ENCODE measurements at regions of chr15 and their contacts with region 1.

Region 1: GRCh38 chr15:49046220-49047102 is at the start of gene SECISBP2L:
- DNase-seq: peak; percentile 80 to 90
- H3K4me3 ChIP-seq: peak within 1 kb of the TSS; percentile 67
- H3K27ac ChIP-seq: peak within 1 kb of the TSS; percentile 11; the same call in 1 of the 2 replicates
- H3K4me1 ChIP-seq: peaks cover 15% of the 10 kb centered on the region
- H3K27me3 ChIP-seq: no peaks in the 10 kb centered on the region
- CTCF ChIP-seq: no peak
- total RNA-seq, gene SECISBP2L: 31.2 and 33.2 TPM in 2 replicates

Region 2: DNA sequence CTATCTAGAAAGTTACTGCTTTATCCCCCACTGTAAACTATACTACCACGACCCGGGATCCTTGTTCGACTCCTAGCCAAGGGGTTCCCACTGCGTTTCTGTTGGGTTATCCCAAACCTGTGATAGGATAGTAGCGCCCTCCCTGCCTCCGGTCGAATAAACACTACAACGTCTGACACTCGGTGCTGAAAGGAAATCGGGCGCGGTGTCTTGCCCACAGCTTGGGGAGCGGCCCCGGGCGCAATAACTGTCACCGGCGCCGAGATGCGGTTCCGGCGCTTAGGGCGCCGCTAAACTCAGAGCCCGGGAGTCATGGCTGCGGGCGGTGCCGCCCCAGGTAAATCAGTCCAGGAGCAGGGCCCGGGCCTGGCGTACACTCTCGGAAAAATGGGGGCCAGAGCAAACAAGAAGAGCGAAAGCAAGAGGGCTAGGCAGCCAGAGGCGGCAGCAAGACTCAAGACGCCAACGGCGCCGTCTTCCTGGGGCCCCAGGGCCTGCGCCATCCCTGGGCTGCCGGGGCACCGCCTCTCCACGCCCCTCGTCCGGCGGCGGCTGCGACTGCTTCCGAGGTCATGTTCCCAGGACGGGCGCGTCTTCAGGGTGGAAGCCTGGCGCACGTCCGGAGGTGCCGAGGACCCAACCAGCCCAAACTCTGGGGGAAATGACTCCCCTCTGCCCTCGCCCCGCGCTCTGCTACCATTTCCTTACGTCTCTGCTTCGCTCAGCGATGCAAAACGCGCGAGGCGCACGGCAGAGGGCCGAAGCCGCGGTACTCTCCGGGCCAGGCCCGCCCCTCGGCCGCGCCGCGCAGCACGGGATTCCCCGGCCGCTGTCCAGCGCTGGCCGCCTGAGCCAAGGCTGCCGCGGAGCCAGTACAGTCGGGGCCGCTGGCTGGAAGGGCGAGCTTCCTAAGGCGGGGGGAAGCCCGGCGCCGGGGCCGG is 715.3 kb before region 1 on chr15 and contains the start of gene DUT:
- CTCF ChIA-PET with region 1: no interaction called
- POLR2A ChIA-PET with region 1: no interaction called
- intact Hi-C with region 1: loop called (anchors 10 kb)
- DNase-seq: peak; percentile 43 to 81
- H3K4me3 ChIP-seq: peak within 1 kb of the TSS; percentile 94
- H3K27ac ChIP-seq: peak within 1 kb of the TSS; percentile 80
- H3K4me1 ChIP-seq: peaks cover 16% of the 10 kb centered on the region
- H3K27me3 ChIP-seq: no peaks in the 10 kb centered on the region
- CTCF ChIP-seq: no peak
- total RNA-seq, gene DUT: 148 and 169 TPM in 2 replicates

Region 3: GRCh38 chr15:48896869-48897814 is 149.3 kb before region 1 on chr15:
- CTCF ChIA-PET with region 1: no interaction called
- POLR2A ChIA-PET with region 1: no interaction called
- intact Hi-C with region 1: no loop called
- DNase-seq: no peak
- H3K4me3 ChIP-seq: no peak overlapping the region
- H3K27ac ChIP-seq: no peak overlapping the region
- H3K4me1 ChIP-seq: no peaks in the 10 kb centered on the region
- H3K27me3 ChIP-seq: no peaks in the 10 kb centered on the region
- CTCF ChIP-seq: no peak

Region 4: GRCh38 chr15:48996276-48996675 is 50.2 kb before region 1 on chr15:
- CTCF ChIA-PET with region 1: no interaction called
- POLR2A ChIA-PET with region 1: interaction called, 11 read pairs
- intact Hi-C with region 1: no loop called
- DNase-seq: no peak
- H3K4me3 ChIP-seq: no peak overlapping the region
- H3K27ac ChIP-seq: no peak overlapping the region
- H3K4me1 ChIP-seq: no peaks in the 10 kb centered on the region
- H3K27me3 ChIP-seq: no peaks in the 10 kb centered on the region
- CTCF ChIP-seq: no peak

Measured in PC-9 (cell line).